Activated B cell treated with CpG ODN at 0.5 μM for 24 hours (primary cell): ENCODE measurements at regions of chr11 and their contacts with region 1.

Region 1: GRCh38 chr11:35617687-35618496 is at the start of gene FJX1:
- DNase-seq: peak; percentile 15
- ATAC-seq: peak; percentile 33
- H3K4me3 Mint-ChIP-seq: peak within 1 kb of the TSS; percentile 79
- H3K27ac Mint-ChIP-seq: no peak within 1 kb of the TSS
- H3K4me1 Mint-ChIP-seq: peaks cover 12% of the 10 kb centered on the region
- H3K27me3 Mint-ChIP-seq: peaks cover 47% of the 10 kb centered on the region
- CTCF ChIP-seq: no peak
- total RNA-seq, gene FJX1: 0.49 and 0.73 TPM in 2 replicates

Region 2: GRCh38 chr11:35662649-35663407 is 44.9 kb after region 1 on chr11 and contains the start of gene TRIM44:
- CTCF ChIA-PET with region 1: no interaction called
- POLR2A ChIA-PET with region 1: no interaction called
- intact Hi-C with region 1: loop called (anchors 1 kb)
- DNase-seq: peak; percentile 77
- ATAC-seq: peak; percentile 82
- H3K4me3 Mint-ChIP-seq: peak within 1 kb of the TSS; percentile 98
- H3K27ac Mint-ChIP-seq: peak within 1 kb of the TSS; percentile 98
- H3K4me1 Mint-ChIP-seq: peaks cover 50% of the 10 kb centered on the region
- H3K27me3 Mint-ChIP-seq: peaks cover 3% of the 10 kb centered on the region
- CTCF ChIP-seq: no peak
- total RNA-seq, gene TRIM44: 66.7 and 67.0 TPM in 2 replicates

Region 3: GRCh38 chr11:36131721-36132397 is 514.0 kb after region 1 on chr11:
- CTCF ChIA-PET with region 1: interaction called, 13 read pairs
- POLR2A ChIA-PET with region 1: no interaction called
- intact Hi-C with region 1: no loop called
- DNase-seq: no peak
- ATAC-seq: no peak
- H3K4me3 Mint-ChIP-seq: no peak overlapping the region
- H3K27ac Mint-ChIP-seq: no peak overlapping the region
- H3K4me1 Mint-ChIP-seq: no peaks in the 10 kb centered on the region
- H3K27me3 Mint-ChIP-seq: peaks cover 18% of the 10 kb centered on the region
- CTCF ChIP-seq: no peak

Region 4: GRCh38 chr11:36265793-36266628 is 648.1 kb after region 1 on chr11:
- CTCF ChIA-PET with region 1: interaction called, 39 read pairs
- POLR2A ChIA-PET with region 1: no interaction called
- intact Hi-C with region 1: loop called (anchors 1 kb)
- DNase-seq: peak; percentile 52
- ATAC-seq: peak; percentile 72
- H3K4me3 Mint-ChIP-seq: no peak overlapping the region
- H3K27ac Mint-ChIP-seq: no peak overlapping the region
- H3K4me1 Mint-ChIP-seq: no peaks in the 10 kb centered on the region
- H3K27me3 Mint-ChIP-seq: peaks cover 10% of the 10 kb centered on the region
- CTCF ChIP-seq: no peak

Region 5: GRCh38 chr11:36492724-36493304 is 874.9 kb after region 1 on chr11:
- CTCF ChIA-PET with region 1: no interaction called
- POLR2A ChIA-PET with region 1: no interaction called
- intact Hi-C with region 1: loop called (anchors 1 kb)
- DNase-seq: no peak
- ATAC-seq: peak; percentile 65
- H3K4me3 Mint-ChIP-seq: no peak overlapping the region
- H3K27ac Mint-ChIP-seq: no peak overlapping the region
- H3K4me1 Mint-ChIP-seq: peaks cover 15% of the 10 kb centered on the region
- H3K27me3 Mint-ChIP-seq: no peaks in the 10 kb centered on the region
- CTCF ChIP-seq: no peak

Region 6: DNA sequence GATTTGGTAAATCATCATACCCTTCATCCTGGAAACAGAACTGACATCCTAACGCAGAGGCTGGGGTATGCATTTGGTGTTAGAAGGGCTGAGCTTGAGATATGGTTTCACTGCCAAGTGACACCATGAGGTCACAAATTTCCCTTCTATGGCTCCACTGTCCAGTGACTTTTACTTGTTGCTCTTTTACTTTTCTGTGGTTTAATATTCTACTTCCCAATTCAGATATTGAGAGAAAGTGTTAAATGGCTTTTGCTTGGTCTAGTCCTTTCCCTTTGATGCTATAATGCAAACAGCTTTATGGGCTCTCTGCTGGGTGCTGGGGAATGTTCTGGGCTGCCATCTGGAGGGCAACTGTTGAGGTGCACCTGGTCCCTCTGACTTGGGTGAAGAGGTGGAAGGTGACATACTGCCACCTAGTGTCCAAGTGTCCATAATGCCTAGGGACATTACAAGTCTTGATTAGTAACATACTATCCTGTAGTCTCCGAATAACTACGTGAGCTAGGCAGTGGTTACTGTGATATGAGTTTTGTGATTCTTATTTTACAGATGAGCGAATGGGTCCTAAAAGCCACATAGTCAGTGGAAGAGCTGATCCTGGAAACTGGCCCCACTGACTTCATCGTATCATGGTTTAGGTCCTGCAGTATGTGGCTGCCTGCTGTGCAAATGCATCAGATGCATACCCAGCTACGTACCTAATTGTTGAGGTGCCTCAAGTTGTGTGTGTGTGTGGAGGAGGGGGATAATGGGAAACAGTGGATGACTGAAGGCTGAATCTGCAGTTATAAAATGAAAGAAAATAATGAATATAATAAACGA is 1129.2 kb after region 1 on chr11:
- CTCF ChIA-PET with region 1: no interaction called
- POLR2A ChIA-PET with region 1: no interaction called
- intact Hi-C with region 1: loop called (anchors 5 kb)
- DNase-seq: peak; percentile 34
- ATAC-seq: peak; percentile 100
- H3K4me3 Mint-ChIP-seq: no peak overlapping the region
- H3K27ac Mint-ChIP-seq: no peak overlapping the region
- H3K4me1 Mint-ChIP-seq: peaks cover 5% of the 10 kb centered on the region
- H3K27me3 Mint-ChIP-seq: peaks cover 10% of the 10 kb centered on the region
- CTCF ChIP-seq: peak; percentile 91